Mammary epithelial cell (primary cell): ENCODE measurements at regions of chr17 and their contacts with region 1.

Region 1: GRCh38 chr17:62109378-62109902 is 44.4 kb upstream of the MED13 start:
- DNase-seq: peak; percentile 82
- H3K4me3 ChIP-seq: no peak overlapping the region
- H3K27ac ChIP-seq: no peak overlapping the region
- H3K4me1 ChIP-seq: no peaks in the 10 kb centered on the region
- H3K27me3 ChIP-seq: no peaks in the 10 kb centered on the region
- CTCF ChIP-seq: peak; percentile 94 to 96

Region 2: GRCh38 chr17:61635913-61636432 is 473.5 kb before region 1 on chr17:
- CTCF ChIA-PET with region 1: no interaction called
- dilution Hi-C with region 1: no loop called
- in situ Hi-C with region 1: loop called (anchors 25 kb)
- intact Hi-C with region 1: loop called (anchors 1 kb)
- DNase-seq: peak; percentile 35
- H3K4me3 ChIP-seq: no peak overlapping the region
- H3K27ac ChIP-seq: no peak overlapping the region
- H3K4me1 ChIP-seq: no peaks in the 10 kb centered on the region
- H3K27me3 ChIP-seq: no peaks in the 10 kb centered on the region
- CTCF ChIP-seq: peak; percentile 74 to 81

Region 3: DNA sequence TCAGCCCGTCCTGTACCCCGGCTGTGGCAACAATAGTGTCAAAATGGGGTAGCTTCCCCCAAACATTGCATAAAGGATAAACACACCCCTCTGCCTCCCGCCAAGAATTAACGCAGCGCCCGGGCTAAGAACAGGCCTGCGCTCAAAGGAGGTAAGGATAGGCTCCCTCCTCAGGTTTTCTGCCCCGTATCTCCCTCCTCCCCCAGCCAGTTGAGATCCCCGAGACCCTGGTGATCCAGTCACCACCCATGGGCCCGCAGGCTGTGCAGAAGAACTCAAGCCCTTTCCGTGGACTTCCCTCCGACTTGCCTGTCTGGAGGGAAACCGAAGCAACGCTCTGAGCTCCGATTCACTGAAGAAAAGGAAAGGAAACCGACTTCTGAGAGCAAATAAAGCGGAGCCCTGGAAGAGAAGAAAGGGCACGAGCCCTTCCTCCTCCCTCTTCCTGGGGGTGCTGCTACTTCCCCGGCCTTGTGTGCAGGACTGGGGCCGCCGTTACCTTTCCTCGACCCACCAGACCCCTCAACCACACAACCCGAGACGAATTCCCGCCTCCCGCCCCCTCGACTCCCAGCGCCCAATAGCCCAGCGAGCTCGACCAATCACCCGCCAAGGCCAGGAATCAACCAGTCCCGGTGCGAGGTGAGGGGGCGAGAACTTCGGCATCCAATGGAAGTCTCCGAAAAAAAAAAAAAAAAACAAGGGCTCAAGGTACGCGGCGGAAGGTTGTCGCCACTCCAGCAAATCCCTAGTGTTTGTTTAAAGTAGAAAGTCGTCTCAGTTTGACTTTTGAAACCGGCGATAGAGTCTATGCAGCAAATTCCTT is 246.3 kb before region 1 on chr17 and contains the start of gene BRIP1:
- CTCF ChIA-PET with region 1: interaction called, 21 read pairs
- dilution Hi-C with region 1: no loop called
- in situ Hi-C with region 1: no loop called
- intact Hi-C with region 1: loop called (anchors 10 kb)
- DNase-seq: peak; percentile 95
- H3K4me3 ChIP-seq: peak within 1 kb of the TSS; percentile 68 to 81 (median 73)
- H3K27ac ChIP-seq: peak within 1 kb of the TSS; percentile 91
- H3K4me1 ChIP-seq: peaks cover 9% of the 10 kb centered on the region
- H3K27me3 ChIP-seq: no peaks in the 10 kb centered on the region
- CTCF ChIP-seq: no peak
- total RNA-seq, gene BRIP1: 10.2 to 13.2 TPM

Region 4: GRCh38 chr17:62065598-62066468 is 43.6 kb before region 1 on chr17:
- CTCF ChIA-PET with region 1: interaction called, 24 read pairs
- dilution Hi-C with region 1: no loop called
- in situ Hi-C with region 1: no loop called
- intact Hi-C with region 1: loop called (anchors 1 kb)
- DNase-seq: peak; percentile 97
- H3K4me3 ChIP-seq: peak overlapping the region; percentile 92 to 99 (median 98)
- H3K27ac ChIP-seq: peak overlapping the region; percentile 96
- H3K4me1 ChIP-seq: peaks cover 12% of the 10 kb centered on the region
- H3K27me3 ChIP-seq: no peaks in the 10 kb centered on the region
- CTCF ChIP-seq: peak; percentile 59 to 90

Region 5: GRCh38 chr17:62076862-62077788 is 32.3 kb before region 1 on chr17:
- CTCF ChIA-PET with region 1: no interaction called
- dilution Hi-C with region 1: no loop called
- in situ Hi-C with region 1: no loop called
- intact Hi-C with region 1: no loop called
- DNase-seq: no peak
- H3K4me3 ChIP-seq: no peak overlapping the region
- H3K27ac ChIP-seq: no peak overlapping the region
- H3K4me1 ChIP-seq: no peaks in the 10 kb centered on the region
- H3K27me3 ChIP-seq: no peaks in the 10 kb centered on the region
- CTCF ChIP-seq: no peak

Region 6: DNA sequence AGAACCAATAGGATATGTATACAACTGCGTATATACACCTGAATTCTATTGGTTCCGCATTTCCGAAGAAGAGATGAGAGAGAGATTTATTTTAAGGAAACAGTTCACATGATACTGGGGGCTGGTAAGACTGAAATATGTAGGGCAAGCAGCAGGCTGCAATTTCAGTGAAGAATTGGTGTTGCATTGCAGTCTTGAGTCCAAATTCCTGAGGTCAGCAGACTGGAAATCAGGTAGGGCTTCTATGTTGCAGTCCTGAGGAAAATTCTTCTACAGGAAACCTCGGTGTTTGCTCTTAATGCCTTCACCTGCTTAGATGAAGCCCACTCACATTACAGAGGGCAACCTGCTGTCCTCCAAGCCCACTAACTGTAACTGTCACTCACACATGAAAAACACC is 83.8 kb after region 1 on chr17:
- CTCF ChIA-PET with region 1: interaction called, 3 read pairs
- dilution Hi-C with region 1: loop called (anchors 5 kb)
- in situ Hi-C with region 1: no loop called
- intact Hi-C with region 1: no loop called
- DNase-seq: no peak
- H3K4me3 ChIP-seq: no peak overlapping the region
- H3K27ac ChIP-seq: no peak overlapping the region
- H3K4me1 ChIP-seq: no peaks in the 10 kb centered on the region
- H3K27me3 ChIP-seq: no peaks in the 10 kb centered on the region
- CTCF ChIP-seq: no peak

Region 7: DNA sequence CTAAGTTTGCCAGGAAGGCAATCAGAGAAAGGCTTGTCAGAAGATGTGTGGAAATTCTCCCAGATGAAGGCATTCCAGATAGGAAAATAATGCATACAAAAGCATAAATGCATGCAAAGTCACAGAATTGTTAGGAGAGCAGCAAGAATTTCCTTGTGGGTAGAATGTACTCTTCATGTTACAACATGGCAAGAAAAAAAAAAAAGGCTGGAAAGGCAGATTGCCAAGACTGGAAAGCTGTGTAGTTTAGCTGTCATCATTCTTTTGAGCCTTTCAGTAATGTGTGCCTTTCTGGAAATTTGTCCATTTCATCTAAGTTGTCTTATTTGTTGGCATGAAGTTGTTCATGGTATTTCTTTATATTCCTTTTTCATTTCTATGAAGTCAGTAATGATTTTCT is 200.0 kb after region 1 on chr17:
- CTCF ChIA-PET with region 1: no interaction called
- dilution Hi-C with region 1: no loop called
- in situ Hi-C with region 1: no loop called
- intact Hi-C with region 1: no loop called
- DNase-seq: peak; percentile 21
- H3K4me3 ChIP-seq: no peak overlapping the region
- H3K27ac ChIP-seq: no peak overlapping the region
- H3K4me1 ChIP-seq: no peaks in the 10 kb centered on the region
- H3K27me3 ChIP-seq: peaks cover 2% of the 10 kb centered on the region
- CTCF ChIP-seq: no peak